Esophagus muscularis mucosa (tissue), 4 donors: ENCODE measurements at regions of chrX and their contacts with region 1.

Region 1: GRCh38 chrX:73855546-73855945 is 292.5 kb downstream of the CHIC1 start:
- DNase-seq: no peak
- H3K4me3 ChIP-seq: no peak overlapping the region
- H3K27ac ChIP-seq: no peak overlapping the region
- H3K4me1 ChIP-seq: no peaks in the 10 kb centered on the region
- H3K27me3 ChIP-seq: no peaks in the 10 kb centered on the region
- CTCF ChIP-seq: peak; percentile 65 to 83 (median 77)
- EP300 ChIP-seq: no peak
- POLR2A ChIP-seq: no peak

Region 2: GRCh38 chrX:73556159-73556558 is 299.4 kb before region 1 on chrX:
- intact Hi-C with region 1: no loop called
- DNase-seq: no peak
- H3K4me3 ChIP-seq: no peak overlapping the region
- H3K27ac ChIP-seq: no peak overlapping the region
- H3K4me1 ChIP-seq: no peaks in the 10 kb centered on the region
- H3K27me3 ChIP-seq: no peaks in the 10 kb centered on the region
- CTCF ChIP-seq: no peak
- EP300 ChIP-seq: no peak
- POLR2A ChIP-seq: no peak

Region 3: GRCh38 chrX:73683236-73683859 is 172.2 kb before region 1 on chrX:
- intact Hi-C with region 1: no loop called
- DNase-seq: no peak
- H3K4me3 ChIP-seq: no peak overlapping the region
- H3K27ac ChIP-seq: no peak overlapping the region
- H3K4me1 ChIP-seq: no peaks in the 10 kb centered on the region
- H3K27me3 ChIP-seq: no peaks in the 10 kb centered on the region
- CTCF ChIP-seq: no peak
- EP300 ChIP-seq: no peak
- POLR2A ChIP-seq: no peak

Region 4: DNA sequence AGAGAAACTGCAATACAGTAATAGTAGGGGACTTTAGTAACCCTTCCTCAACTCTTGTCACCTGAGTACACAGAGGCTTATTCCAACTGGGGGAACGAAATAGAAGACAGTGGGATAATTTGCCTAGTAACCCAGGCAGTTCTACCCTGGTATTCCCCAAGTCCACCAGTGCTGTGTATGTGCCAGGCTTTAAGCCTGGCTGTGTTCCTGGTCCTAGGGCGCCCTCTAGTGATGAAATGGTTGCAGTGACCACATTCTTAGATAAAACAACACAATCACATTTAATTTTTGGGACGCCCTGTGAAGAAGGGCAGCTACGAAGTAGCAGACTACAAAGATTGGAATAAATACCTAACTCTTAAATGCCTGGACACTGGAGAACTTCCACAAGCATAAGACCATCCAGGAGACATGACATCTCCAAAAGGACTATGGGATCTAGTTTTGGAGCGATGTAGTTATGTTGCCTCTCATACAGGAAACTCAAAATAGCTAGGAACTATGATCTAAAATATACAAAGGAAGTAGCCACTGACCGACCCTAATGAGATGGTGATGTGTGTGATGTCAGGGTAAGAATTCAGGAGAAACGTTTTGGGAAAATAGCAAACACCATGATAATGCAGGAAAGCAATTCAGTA is 160.0 kb after region 1 on chrX:
- intact Hi-C with region 1: loop called (anchors 1 kb)
- DNase-seq: no peak
- H3K4me3 ChIP-seq: no peak overlapping the region
- H3K27ac ChIP-seq: no peak overlapping the region
- H3K4me1 ChIP-seq: peaks cover 0 to 6% (median 0%) of the 10 kb centered on the region in 4 donors
- H3K27me3 ChIP-seq: no peaks in the 10 kb centered on the region
- CTCF ChIP-seq: peak; percentile 68 to 79 (median 78)
- EP300 ChIP-seq: no peak
- POLR2A ChIP-seq: no peak

Region 5: DNA sequence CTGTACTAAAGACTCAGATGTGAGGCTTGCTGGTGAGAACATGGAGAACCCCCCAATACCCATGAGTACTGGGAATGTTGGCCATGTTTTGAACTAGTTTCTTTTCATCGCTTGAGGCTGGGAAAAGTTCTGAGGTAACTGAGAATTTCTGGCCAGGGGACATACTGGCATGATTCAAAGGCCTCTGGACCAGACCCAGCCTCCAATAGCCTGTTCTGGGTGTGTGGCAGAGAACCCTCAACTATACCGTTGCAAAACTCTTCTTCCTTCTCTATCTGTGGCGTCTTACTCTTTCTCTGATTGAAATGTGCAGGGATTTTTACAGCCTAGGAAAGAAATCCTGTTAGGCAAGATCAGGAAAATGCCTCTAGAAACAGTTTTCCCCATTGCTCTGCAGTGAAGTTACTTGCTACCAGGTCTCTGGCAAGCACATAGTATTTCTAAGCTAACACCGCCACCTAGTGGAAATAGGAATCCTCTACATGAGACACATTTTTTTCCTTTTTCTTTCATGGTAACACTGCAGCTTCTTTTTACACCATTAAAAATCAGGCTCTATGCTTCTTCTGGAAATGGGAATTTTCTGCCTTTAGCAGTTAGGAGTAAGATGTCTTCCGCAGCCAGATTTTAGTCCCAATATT is 277.7 kb after region 1 on chrX:
- intact Hi-C with region 1: loop called (anchors 2 kb)
- DNase-seq: no peak
- H3K4me3 ChIP-seq: no peak overlapping the region
- H3K27ac ChIP-seq: no peak overlapping the region
- H3K4me1 ChIP-seq: peaks cover 0 to 7% (median 0%) of the 10 kb centered on the region in 4 donors
- H3K27me3 ChIP-seq: no peaks in the 10 kb centered on the region
- CTCF ChIP-seq: peak; percentile 61 to 79 (median 65)
- EP300 ChIP-seq: no peak
- POLR2A ChIP-seq: no peak

Region 6: GRCh38 chrX:74343343-74344279 is 488.1 kb after region 1 on chrX:
- intact Hi-C with region 1: loop called (anchors 5 kb)
- DNase-seq: no peak
- H3K4me3 ChIP-seq: no peak overlapping the region
- H3K27ac ChIP-seq: no peak overlapping the region
- H3K4me1 ChIP-seq: no peaks in the 10 kb centered on the region
- H3K27me3 ChIP-seq: no peaks in the 10 kb centered on the region
- CTCF ChIP-seq: peak; percentile 45 to 53 (median 51)
- EP300 ChIP-seq: no peak
- POLR2A ChIP-seq: no peak